Activated CD4-positive, alpha-beta T cell treated with anti-CD3 and anti-CD28 coated beads for 36 hours (primary cell): ENCODE measurements at regions of chr1 and their contacts with region 1.

Region 1: GRCh38 chr1:236759252-236759859 is 35.7 kb upstream of the MTR start:
- DNase-seq: no peak
- ATAC-seq: peak; percentile 49
- H3K4me3 Mint-ChIP-seq: no peak overlapping the region
- H3K27ac Mint-ChIP-seq: no peak overlapping the region
- H3K4me1 Mint-ChIP-seq: peaks cover 2% of the 10 kb centered on the region
- H3K27me3 Mint-ChIP-seq: no peaks in the 10 kb centered on the region

Region 2: DNA sequence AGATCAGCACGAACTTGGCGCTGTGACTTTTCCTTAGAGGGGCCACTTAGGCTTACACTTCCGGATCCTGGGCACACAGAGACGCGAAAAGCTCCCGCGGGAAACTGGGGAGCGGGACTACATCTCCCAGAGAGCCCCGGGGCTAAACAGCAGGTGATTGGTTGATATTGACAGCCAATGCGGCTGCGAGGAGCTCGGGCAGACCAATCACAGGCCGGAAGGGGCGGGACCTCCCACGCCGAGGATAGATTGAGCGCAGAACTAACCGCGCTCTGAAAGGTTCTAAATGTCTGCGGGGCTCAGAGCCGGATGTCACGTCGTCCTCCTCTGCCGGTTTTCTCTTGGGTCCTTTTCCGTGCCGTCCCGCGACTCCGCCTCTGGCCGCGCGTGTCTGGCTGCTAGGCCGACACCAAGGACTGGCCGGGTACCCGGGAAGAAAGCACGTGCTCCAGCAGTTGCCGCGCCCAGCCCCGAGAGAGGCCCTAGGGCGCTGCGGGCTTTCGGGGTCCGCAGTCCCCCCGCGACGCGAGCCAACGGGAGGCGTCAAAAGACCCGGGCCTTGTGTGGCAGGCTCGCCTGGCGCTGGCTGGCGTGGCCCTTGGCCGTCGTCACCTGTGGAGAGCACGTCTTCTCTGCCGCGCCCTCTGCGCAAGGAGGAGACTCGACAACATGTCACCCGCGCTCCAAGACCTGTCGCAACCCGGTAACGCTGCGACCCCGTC is 35.8 kb after region 1 on chr1 and contains the start of gene MTR:
- CTCF ChIA-PET with region 1: interaction called, 17 read pairs
- POLR2A ChIA-PET with region 1: no interaction called
- intact Hi-C with region 1: no loop called
- DNase-seq: peak; percentile 98
- ATAC-seq: peak; percentile 95
- H3K4me3 Mint-ChIP-seq: peak within 1 kb of the TSS; percentile 97
- H3K27ac Mint-ChIP-seq: peak within 1 kb of the TSS; percentile 100
- H3K4me1 Mint-ChIP-seq: peaks cover 33% of the 10 kb centered on the region
- H3K27me3 Mint-ChIP-seq: peaks cover 2% of the 10 kb centered on the region
- total RNA-seq, gene MTR: 57.3 to 64.8 TPM

Region 3: GRCh38 chr1:236868625-236869467 is 109.5 kb after region 1 on chr1:
- CTCF ChIA-PET with region 1: interaction called, 16 read pairs
- POLR2A ChIA-PET with region 1: no interaction called
- intact Hi-C with region 1: loop called (anchors 1 kb)
- DNase-seq: peak; percentile 63
- ATAC-seq: peak; percentile 76
- H3K4me3 Mint-ChIP-seq: no peak overlapping the region
- H3K27ac Mint-ChIP-seq: no peak overlapping the region
- H3K4me1 Mint-ChIP-seq: peaks cover 3% of the 10 kb centered on the region
- H3K27me3 Mint-ChIP-seq: no peaks in the 10 kb centered on the region

Region 4: DNA sequence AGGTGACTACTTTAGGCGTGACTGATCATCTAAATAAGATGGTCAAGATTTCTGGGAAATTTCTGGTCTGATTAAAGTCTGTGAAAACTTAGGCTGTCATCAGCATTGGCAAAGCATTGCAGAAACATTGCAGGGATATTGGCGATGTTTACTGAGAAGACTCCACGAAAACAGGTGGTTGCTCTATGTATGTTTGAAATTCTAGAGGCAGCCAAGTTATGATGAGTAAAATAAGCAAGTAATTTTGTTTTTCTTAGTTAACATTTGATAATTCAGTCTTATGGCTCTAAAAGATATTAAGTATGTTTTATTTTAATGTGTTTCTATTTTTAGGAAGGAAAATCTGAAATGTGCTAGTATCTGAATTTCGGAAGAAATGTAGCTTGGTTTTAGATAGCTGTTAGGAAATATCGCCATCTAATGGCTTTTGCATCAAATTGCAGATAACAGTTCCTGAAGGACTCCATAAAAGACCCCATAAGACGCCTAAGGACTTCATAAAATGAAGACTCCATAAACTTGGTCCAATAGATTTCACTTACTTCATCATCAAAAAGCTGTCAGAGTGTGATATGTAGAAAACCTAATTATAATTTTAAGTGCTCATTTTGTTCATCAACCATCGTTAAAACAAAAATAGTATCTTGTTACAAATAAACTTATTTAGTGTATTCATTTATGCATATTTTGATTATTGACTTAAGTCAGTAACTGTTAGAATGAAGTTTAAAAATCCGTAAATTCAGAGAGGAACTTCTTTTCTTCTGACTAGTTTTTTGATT is 627.2 kb after region 1 on chr1:
- CTCF ChIA-PET with region 1: interaction called, 6 read pairs
- POLR2A ChIA-PET with region 1: no interaction called
- intact Hi-C with region 1: loop called (anchors 2 to 5 kb)
- DNase-seq: no peak
- ATAC-seq: no peak
- H3K4me3 Mint-ChIP-seq: no peak overlapping the region
- H3K27ac Mint-ChIP-seq: no peak overlapping the region
- H3K4me1 Mint-ChIP-seq: no peaks in the 10 kb centered on the region
- H3K27me3 Mint-ChIP-seq: peaks cover 2% of the 10 kb centered on the region